ENCODE measurements at regions of chr17 and their contacts with region 1.

Region 1: DNA sequence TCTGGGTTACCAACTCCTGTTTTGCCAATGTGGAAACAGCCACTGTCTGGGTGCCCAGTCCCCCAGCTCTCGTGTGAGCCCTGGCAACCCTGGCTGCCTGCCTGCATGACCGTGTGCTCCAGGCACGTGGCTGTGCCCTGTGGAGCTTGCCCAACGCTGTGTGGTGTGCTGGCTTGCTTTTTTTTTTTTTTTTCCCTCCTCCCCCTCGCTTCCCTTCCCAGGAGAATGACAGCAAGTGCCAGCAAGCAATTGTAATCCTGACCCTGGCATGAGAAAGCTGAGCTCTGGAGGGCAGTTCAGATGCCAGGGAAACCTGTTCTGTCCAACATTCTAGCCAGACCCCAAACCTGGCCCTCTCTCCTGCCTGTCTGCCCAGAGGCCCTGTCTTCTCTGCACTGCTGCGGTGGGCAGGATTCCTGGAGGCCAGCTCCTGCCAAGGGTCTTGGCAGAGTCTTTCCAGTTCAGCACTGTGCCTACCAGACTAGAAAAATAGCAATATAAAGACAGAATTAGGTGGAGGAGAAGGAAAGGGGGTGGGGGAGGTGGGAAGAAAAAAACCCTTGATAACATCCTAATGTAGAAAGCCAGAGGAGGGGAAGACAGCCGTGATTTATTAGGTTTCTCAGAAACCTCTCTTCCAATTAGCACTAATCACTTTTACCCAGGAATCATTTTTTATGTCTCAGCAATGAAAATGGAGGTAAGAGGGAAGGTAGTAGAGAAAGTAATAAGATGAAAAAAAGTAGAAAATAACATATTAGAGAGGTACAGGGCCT is 9.0 kb downstream of the HLF start:
- DNase-seq: peak; percentile 85
- ATAC-seq: peak; percentile 83

Region 2: DNA sequence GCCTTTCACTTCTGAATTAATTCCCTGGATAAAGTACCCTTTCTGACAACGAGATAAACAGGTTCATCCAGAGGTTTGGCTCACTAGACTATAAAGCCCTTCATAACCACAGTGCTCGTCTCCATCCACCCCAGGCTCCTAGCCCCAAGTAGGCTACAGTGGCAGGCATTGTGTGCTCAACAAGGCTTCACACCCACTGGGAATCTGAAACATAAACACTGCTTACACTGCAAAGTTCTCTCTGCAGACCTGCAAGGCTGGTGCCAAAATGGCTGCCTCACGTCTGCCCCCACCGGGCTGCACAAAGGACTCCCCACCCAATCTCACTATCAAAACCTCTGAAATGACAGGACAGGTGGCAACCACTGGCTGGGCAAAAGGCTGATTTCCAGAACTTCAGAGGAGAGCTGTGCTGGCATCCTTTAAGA is 14.1 kb before region 1 on chr17:
- intact Hi-C with region 1: no loop called
- DNase-seq: no peak
- ATAC-seq: no peak

Region 3: GRCh38 chr17:55285340-55286301 is 11.9 kb after region 1 on chr17:
- intact Hi-C with region 1: loop called (anchors 1 kb)
- DNase-seq: peak; percentile 92
- ATAC-seq: peak; percentile 85

Measured in Right ventricle myocardium inferior (tissue), 1 donor.